Lower leg skin (tissue), 4 donors: ENCODE measurements at regions of chr6 and their contacts with region 1.

Region 1: GRCh38 chr6:36442671-36443470 is at the starts of genes KCTD20 and PXT1:
- DNase-seq: peak; percentile 75 to 97
- H3K4me3 ChIP-seq: peak within 1 kb of the TSS; percentile 93
- CTCF ChIP-seq: no peak
- POLR2A ChIP-seq: no peak
- total RNA-seq, gene KCTD20: 48.5 to 84.1 (median 56.8) TPM
- total RNA-seq, gene PXT1: not detected

Region 2: GRCh38 chr6:36546920-36547645 is 104.2 kb after region 1 on chr6 and contains the start of gene STK38:
- intact Hi-C with region 1: loop called (anchors 10 kb)
- DNase-seq: peak; percentile 89 to 98
- H3K4me3 ChIP-seq: peak within 1 kb of the TSS; percentile 96
- CTCF ChIP-seq: no peak
- POLR2A ChIP-seq: peak in 1 of 2 donors; percentile 94
- total RNA-seq, gene STK38: 27.1 to 37.4 (median 30.6) TPM

Region 3: GRCh38 chr6:36594029-36594815 is 151.4 kb after region 1 on chr6 and contains the start of gene SRSF3:
- intact Hi-C with region 1: loop called (anchors 10 kb)
- DNase-seq: peak; percentile 97 to 98
- H3K4me3 ChIP-seq: peak within 1 kb of the TSS; percentile 63
- CTCF ChIP-seq: peak in 1 of 3 donors; percentile 50
- POLR2A ChIP-seq: peak in 1 of 2 donors; percentile 99
- total RNA-seq, gene SRSF3: 114 to 272 (median 177) TPM

Region 4: DNA sequence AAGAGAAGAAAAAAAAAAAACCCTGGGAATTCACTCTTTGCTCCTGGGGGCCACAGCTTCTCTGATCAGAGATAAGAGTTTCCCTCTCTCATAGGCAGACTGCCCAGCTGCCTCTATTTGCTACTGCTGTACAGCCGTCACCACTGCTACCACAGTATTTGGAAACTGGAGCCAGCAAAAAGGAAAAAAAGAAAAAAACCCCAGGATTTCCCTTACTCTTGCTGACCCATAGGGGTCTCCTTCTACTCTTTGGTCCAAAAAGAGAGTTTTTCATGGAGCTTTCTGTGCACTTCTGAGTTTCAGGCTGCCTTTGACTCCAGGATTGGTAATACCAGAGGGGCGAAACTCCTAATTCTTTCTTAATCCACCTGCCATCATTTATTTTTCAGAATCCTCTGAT is 1165.1 kb after region 1 on chr6:
- intact Hi-C with region 1: no loop called
- DNase-seq: no peak
- H3K4me3 ChIP-seq: no peak overlapping the region
- CTCF ChIP-seq: no peak
- POLR2A ChIP-seq: no peak